ENCODE measurements at regions of chr16 and their contacts with region 1.

Region 1: DNA sequence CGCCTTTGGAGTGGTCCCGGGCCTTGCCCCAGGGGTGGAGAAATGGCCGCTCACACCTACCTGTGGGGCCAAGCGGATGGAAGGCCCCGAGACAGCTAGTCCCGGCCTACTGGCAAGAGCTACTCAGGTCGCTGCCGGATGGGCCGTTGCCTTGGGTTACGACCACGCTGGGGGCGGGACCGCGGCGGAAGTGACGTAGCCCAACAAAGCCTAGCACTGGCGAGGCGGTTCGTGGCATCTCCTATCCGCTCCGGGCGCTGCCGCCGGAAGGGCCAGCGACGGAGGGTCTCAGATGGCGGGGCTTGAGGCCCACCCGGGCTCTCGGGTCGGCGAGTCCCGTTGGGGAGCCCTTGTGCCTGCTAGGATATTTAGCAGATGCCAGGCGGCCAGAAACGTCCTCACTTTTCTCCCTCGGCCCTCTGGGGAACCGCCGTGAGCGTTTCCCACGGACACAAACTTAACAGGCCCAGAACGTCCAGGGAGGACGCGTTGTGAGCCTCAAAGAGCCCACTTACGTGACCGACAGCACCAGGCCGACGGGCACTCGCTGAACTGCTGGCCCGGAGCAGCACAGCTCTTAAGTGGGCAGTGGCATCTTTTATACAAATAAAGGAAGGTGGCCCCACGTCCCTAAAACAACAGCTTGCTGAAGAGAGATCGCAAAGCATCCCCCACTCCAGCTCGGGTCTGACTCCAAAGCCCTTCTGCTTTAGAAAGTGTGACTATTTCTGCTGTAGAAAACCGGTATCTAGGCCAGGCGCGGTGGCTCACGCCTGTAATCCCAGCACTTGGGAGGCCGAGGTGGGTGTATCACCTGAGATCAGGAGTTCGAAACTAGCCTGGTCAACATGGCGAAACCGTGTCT is at the start of gene C16orf46:
- DNase-seq: peak; percentile 88
- ATAC-seq: peak; percentile 95
- H3K4me3 ChIP-seq: peak within 1 kb of the TSS; percentile 78
- H3K27ac ChIP-seq: peak within 1 kb of the TSS; percentile 69
- H3K4me1 ChIP-seq: peaks cover 5% of the 10 kb centered on the region
- H3K27me3 ChIP-seq: no peaks in the 10 kb centered on the region
- CTCF ChIP-seq: no peak
- EP300 ChIP-seq: no peak
- POLR2A ChIP-seq: peak; percentile 96
- RAD21 ChIP-seq: no peak
- polyA plus RNA-seq, gene C16orf46: 0.04 TPM in 1 of 2 experiments, not detected in the other

Region 2: GRCh38 chr16:81035398-81035974 is 41.8 kb before region 1 on chr16 and contains the start of gene ATMIN:
- CTCF ChIA-PET with region 1: interaction called, 13 read pairs
- POLR2A ChIA-PET with region 1: interaction called, 9 read pairs
- RAD21 ChIA-PET with region 1: interaction called, 20 read pairs
- SMC1A ChIA-PET with region 1: interaction called, 5 read pairs
- in situ Hi-C with region 1: no loop called
- intact Hi-C with region 1: loop called (anchors 2 kb)
- DNase-seq: peak; percentile 15
- ATAC-seq: peak; percentile 97
- H3K4me3 ChIP-seq: peak within 1 kb of the TSS; percentile 81
- H3K27ac ChIP-seq: peak within 1 kb of the TSS; percentile 32; the same call in 1 of the 2 replicates
- H3K4me1 ChIP-seq: no peaks in the 10 kb centered on the region
- H3K27me3 ChIP-seq: no peaks in the 10 kb centered on the region
- CTCF ChIP-seq: peak; percentile 88 to 99 (median 98)
- EP300 ChIP-seq: no peak
- POLR2A ChIP-seq: peak; percentile 63
- RAD21 ChIP-seq: peak; percentile 57
- polyA plus RNA-seq, gene ATMIN: 5.2 to 8.7 TPM

Region 3: GRCh38 chr16:81095953-81096717 is 18.8 kb after region 1 on chr16 and contains the start of gene GCSH:
- CTCF ChIA-PET with region 1: no interaction called
- POLR2A ChIA-PET with region 1: interaction called, 4 read pairs
- RAD21 ChIA-PET with region 1: interaction called, 4 read pairs
- SMC1A ChIA-PET with region 1: interaction called, 4 read pairs
- in situ Hi-C with region 1: no loop called
- intact Hi-C with region 1: loop called (anchors 2 kb)
- DNase-seq: peak; percentile 95
- ATAC-seq: peak; percentile 99
- H3K4me3 ChIP-seq: peak within 1 kb of the TSS; percentile 97
- H3K27ac ChIP-seq: peak within 1 kb of the TSS; percentile 38
- H3K4me1 ChIP-seq: peaks cover 12% of the 10 kb centered on the region
- H3K27me3 ChIP-seq: no peaks in the 10 kb centered on the region
- CTCF ChIP-seq: no peak
- EP300 ChIP-seq: no peak
- POLR2A ChIP-seq: peak; percentile 73; the same call in 1 of the 2 replicates
- RAD21 ChIP-seq: no peak
- polyA plus RNA-seq, gene GCSH: 14.7 to 40.2 TPM

Measured in GM12878 (cell line).